Endothelial cell of umbilical vein (primary cell): ENCODE measurements at regions of chr10 and their contacts with region 1.

Region 1: DNA sequence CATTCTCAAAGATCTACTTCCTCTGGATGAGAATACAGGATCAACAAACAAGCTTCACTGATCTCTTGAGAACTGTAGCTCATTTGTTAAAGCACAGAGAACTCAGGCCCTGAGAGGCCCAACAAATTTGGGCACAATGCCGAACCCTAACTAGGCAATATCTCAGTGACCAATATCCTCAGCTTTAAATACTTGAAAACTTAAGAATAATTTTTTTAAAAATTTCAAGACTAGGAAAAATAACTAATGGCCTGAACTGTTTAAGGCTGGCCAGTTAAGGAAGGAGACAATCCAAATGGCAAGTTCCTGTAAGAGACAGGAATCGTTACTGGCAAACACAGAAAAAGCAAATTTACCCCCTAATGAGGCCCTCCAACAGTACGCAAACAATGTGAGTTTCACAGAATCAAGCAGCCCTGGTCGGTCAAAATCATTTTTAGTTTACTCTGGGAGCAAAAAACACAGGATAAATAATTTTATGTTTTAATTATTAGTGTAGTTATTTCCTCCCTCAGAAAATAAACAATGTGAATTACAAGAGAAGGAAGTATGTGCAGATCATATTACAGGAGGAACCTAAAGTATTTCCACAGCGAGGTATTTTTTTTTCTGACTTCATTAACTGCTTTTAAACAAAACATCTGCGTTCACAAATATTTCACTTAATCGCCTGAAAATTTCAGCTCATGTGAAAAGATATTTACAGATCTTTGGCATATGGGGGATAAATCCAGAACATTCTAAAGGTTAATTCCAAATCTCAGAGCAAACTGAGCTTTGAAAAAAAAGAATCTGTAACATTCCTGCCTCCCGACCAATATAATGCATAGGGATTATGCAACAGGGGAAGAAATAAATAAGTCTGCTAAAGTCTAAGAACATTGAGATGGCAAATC is 39.5 kb downstream of the NT5C2 start:
- DNase-seq: peak; percentile 71
- H3K4me3 ChIP-seq: peak overlapping the region in 2 of 3 experiments; percentile 2 to 56
- H3K27ac ChIP-seq: peak overlapping the region; percentile 91
- H3K4me1 ChIP-seq: peaks cover 39% of the 10 kb centered on the region
- H3K27me3 ChIP-seq: no peaks in the 10 kb centered on the region
- CTCF ChIP-seq: no peak
- POLR2A ChIP-seq: no peak

Region 2: DNA sequence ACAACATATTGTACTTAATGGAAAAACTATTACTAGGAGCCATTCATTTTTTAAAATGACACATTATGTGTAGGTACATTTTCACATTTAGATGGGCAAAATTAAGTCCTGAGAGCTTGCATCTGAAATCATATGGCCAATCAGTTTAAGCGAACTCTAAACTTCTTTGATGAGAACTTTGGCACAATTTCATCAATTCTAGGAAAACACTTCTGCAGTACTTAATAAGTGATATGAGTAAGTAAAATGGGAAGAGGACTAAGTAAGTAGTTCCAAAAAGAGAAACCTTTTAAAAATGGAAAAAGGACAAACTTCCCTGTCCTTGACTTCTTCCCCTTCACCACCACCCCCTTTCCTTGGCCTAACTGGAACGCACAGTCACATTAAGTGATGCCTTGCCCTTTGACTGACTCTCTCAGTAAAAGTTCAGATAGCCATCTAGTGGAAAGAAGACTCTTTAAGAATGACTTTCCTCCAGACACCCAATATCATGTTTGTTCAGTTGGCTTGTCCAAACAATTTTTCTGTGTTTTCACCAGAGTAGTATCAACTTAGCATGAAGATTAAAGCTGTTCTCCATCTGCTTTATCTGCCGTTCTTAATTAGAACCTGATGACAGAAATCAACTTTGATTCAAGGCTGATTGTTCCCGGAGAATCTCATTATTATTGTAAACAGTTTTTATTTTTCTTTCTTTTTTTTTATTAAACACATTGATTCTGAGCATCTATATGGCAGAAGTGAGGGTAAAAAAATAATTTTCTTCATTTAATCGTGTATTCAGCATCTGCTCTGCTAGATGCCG is 190.4 kb before region 1 on chr10:
- CTCF ChIA-PET with region 1: no interaction called
- POLR2A ChIA-PET with region 1: no interaction called
- dilution Hi-C with region 1: no loop called
- intact Hi-C with region 1: no loop called
- DNase-seq: peak; percentile 39
- H3K4me3 ChIP-seq: no peak overlapping the region
- H3K27ac ChIP-seq: no peak overlapping the region
- H3K4me1 ChIP-seq: peaks cover 2% of the 10 kb centered on the region
- H3K27me3 ChIP-seq: no peaks in the 10 kb centered on the region
- CTCF ChIP-seq: no peak
- POLR2A ChIP-seq: no peak

Region 3: GRCh38 chr10:103141950-103142349 is 11.6 kb before region 1 on chr10:
- CTCF ChIA-PET with region 1: interaction called, 10 read pairs
- POLR2A ChIA-PET with region 1: no interaction called
- dilution Hi-C with region 1: no loop called
- intact Hi-C with region 1: no loop called
- DNase-seq: no peak
- H3K4me3 ChIP-seq: no peak overlapping the region
- H3K27ac ChIP-seq: no peak overlapping the region
- H3K4me1 ChIP-seq: peaks cover 8% of the 10 kb centered on the region
- H3K27me3 ChIP-seq: no peaks in the 10 kb centered on the region
- CTCF ChIP-seq: no peak
- POLR2A ChIP-seq: no peak

Region 4: DNA sequence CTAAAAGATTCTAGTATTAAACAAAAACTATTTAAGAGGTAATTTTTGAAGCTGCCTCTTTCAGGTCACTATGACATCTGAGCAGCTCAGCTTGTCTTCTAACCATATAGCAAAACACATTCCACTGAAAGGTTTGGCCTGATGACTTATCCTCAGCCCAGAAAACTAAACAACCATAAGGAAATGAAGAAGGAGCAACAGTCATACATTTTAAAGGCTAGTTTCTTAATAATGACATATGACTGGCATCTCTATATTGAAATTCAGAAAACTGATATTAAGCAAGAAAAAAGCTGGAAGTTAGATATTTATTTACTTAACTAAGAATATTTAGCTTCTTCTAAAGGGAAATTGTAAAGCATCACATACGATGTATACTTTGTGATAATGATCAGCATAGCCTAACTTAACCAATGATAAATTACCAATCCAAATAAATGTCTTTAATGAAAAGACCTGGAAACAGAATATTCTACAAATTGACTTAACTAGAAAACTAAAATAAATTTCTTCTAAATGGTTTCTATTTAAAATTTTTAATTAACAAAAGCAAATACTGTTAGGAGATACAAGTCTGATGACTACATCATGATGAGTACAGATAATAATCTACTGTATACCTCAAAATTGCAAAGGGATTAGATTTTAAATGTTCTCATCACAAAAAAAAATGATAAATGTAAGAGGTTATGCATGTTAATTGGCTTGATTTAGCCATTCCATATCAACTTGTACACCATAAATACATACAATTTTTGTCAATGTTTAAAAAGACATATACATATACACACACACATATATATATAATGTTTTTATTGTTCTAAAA is 15.1 kb after region 1 on chr10:
- CTCF ChIA-PET with region 1: interaction called, 9 read pairs
- POLR2A ChIA-PET with region 1: interaction called, 3 read pairs
- dilution Hi-C with region 1: no loop called
- intact Hi-C with region 1: loop called (anchors 1 kb)
- DNase-seq: peak; percentile 36
- H3K4me3 ChIP-seq: no peak overlapping the region
- H3K27ac ChIP-seq: no peak overlapping the region
- H3K4me1 ChIP-seq: peaks cover 34% of the 10 kb centered on the region
- H3K27me3 ChIP-seq: no peaks in the 10 kb centered on the region
- CTCF ChIP-seq: no peak
- POLR2A ChIP-seq: no peak

Region 5: GRCh38 chr10:103231047-103231551 is 77.5 kb after region 1 on chr10:
- CTCF ChIA-PET with region 1: interaction called, 4 read pairs
- POLR2A ChIA-PET with region 1: interaction called, 19 read pairs
- dilution Hi-C with region 1: no loop called
- intact Hi-C with region 1: loop called (anchors 1 kb)
- DNase-seq: peak; percentile 92
- H3K4me3 ChIP-seq: no peak overlapping the region
- H3K27ac ChIP-seq: peak overlapping the region; percentile 97
- H3K4me1 ChIP-seq: peaks cover 32% of the 10 kb centered on the region
- H3K27me3 ChIP-seq: no peaks in the 10 kb centered on the region
- CTCF ChIP-seq: no peak
- POLR2A ChIP-seq: peak; percentile 60

Region 6: DNA sequence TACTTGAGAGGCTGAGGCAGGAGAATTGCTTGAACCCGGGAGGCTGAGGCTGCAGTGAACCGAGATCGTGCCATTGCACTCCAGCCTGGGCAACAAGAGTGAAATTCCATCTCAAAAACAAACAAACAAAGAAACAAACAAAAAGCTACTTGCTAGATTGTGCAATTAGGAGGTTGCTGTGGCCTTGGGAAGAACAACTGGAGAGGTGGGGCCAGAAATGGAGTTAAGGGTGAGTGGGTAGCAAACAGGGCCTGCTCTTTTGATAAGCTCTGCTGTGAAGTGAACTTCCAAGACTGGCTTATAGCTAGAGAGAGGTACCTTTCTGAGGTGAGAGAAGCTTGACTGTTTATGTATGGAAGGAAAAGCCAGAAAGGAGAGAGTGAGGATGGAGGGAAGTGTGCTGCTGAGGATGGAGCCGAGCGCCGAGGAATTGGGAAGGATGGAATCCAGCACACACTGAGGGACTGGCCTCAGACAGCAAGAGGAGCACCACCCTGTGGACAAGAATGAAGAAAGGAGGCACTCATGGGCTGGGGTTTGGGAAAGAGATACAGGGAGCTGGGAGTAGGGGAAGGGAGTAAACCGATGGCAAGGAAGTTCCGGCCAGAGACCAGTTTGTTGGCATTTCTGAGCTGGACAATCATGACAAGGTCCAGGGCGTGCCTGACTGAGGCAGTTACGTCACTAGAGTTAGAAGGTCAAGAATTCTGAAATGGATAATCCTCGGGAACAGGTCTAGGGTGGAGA is 85.1 kb after region 1 on chr10:
- CTCF ChIA-PET with region 1: interaction called, 55 read pairs
- POLR2A ChIA-PET with region 1: no interaction called
- dilution Hi-C with region 1: no loop called
- intact Hi-C with region 1: no loop called
- DNase-seq: peak; percentile 52
- H3K4me3 ChIP-seq: no peak overlapping the region
- H3K27ac ChIP-seq: no peak overlapping the region
- H3K4me1 ChIP-seq: peaks cover 13% of the 10 kb centered on the region
- H3K27me3 ChIP-seq: no peaks in the 10 kb centered on the region
- CTCF ChIP-seq: peak; percentile 25 to 50
- POLR2A ChIP-seq: no peak